ENCODE measurements at regions of chr18 and their contacts with region 1.

Region 1: GRCh38 chr18:41009926-41010325 is 945.1 kb upstream of the PIK3C3 start:
- DNase-seq: no peak
- ATAC-seq: no peak
- H3K4me3 ChIP-seq: no peak overlapping the region
- H3K27ac ChIP-seq: no peak overlapping the region
- H3K4me1 ChIP-seq: no peaks in the 10 kb centered on the region
- H3K27me3 ChIP-seq: no peaks in the 10 kb centered on the region
- CTCF ChIP-seq: no peak
- POLR2A ChIP-seq: no peak

Region 2: GRCh38 chr18:40607542-40608148 is 402.3 kb before region 1 on chr18:
- intact Hi-C with region 1: no loop called
- DNase-seq: no peak
- ATAC-seq: no peak
- H3K4me3 ChIP-seq: no peak overlapping the region
- H3K27ac ChIP-seq: no peak overlapping the region
- H3K4me1 ChIP-seq: no peaks in the 10 kb centered on the region
- H3K27me3 ChIP-seq: no peaks in the 10 kb centered on the region
- CTCF ChIP-seq: no peak
- POLR2A ChIP-seq: no peak

Region 3: GRCh38 chr18:41075212-41075611 is 65.3 kb after region 1 on chr18:
- intact Hi-C with region 1: loop called in 1 of 10 experiments (anchors 2 kb)
- DNase-seq: no peak
- ATAC-seq: no peak
- H3K4me3 ChIP-seq: no peak overlapping the region
- H3K27ac ChIP-seq: no peak overlapping the region
- H3K4me1 ChIP-seq: no peaks in the 10 kb centered on the region
- H3K27me3 ChIP-seq: no peaks in the 10 kb centered on the region
- CTCF ChIP-seq: no peak
- POLR2A ChIP-seq: no peak

Region 4: GRCh38 chr18:42736074-42736473 is 1726.1 kb after region 1 on chr18:
- intact Hi-C with region 1: no loop called
- DNase-seq: no peak
- ATAC-seq: no peak
- H3K4me3 ChIP-seq: no peak overlapping the region
- H3K27ac ChIP-seq: no peak overlapping the region
- H3K4me1 ChIP-seq: no peaks in the 10 kb centered on the region
- H3K27me3 ChIP-seq: no peaks in the 10 kb centered on the region
- CTCF ChIP-seq: no peak
- POLR2A ChIP-seq: no peak